A549 (cell line): ENCODE measurements at regions of chr15 and their contacts with region 1.

Region 1: GRCh38 chr15:41465822-41466421 is 27.8 kb upstream of the ITPKA start:
- DNase-seq: peak; percentile 31 to 56
- ATAC-seq: peak; percentile 59 to 77; a peak in 5 of 6 replicates
- H3K4me3 ChIP-seq: no peak overlapping the region
- H3K27ac ChIP-seq: no peak overlapping the region
- H3K4me1 ChIP-seq: no peaks in the 10 kb centered on the region
- CTCF ChIP-seq: peak; percentile 80
- EP300 ChIP-seq: no peak
- POLR2A ChIP-seq: no peak
- RAD21 ChIP-seq: peak; percentile 76 to 83

Region 2: DNA sequence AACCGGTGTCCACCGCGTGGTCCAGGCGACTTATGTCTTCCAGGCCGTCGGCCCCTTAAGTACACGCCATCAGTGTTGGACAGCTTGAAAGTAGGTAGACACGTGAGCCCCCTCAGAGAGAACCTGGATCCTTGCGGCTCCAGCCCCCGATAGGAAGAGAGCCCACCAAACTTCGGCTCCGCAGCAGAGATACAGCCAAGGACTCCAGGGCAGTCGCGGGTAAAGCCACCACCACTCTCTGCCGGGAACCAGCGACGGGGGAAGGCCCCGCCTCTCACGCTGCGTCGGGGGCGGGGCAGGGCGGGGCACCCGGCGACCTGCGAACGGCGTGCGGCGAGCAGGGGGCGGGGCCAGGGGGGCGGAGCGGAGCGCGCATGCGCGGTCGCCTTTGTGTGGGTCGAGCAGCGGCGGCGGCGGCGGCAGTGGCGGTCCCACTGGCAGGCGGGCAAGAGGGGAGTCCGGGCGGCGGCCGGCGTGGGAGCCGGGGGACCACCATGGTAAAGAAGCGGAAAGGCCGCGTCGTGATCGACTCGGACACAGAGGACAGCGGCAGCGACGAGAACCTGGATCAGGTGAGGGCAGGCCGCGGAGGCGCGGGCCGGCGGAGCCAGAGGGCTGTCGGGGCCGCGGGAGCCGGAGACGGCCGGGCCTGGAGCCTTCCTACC is 49.0 kb before region 1 on chr15 and contains the start of gene RTF1:
- CTCF ChIA-PET with region 1: no interaction called
- POLR2A ChIA-PET with region 1: no interaction called
- DNase-seq: peak; percentile 57 to 84
- ATAC-seq: peak; percentile 88 to 91
- H3K4me3 ChIP-seq: peak within 1 kb of the TSS; percentile 86
- H3K27ac ChIP-seq: peak within 1 kb of the TSS; percentile 84 to 95
- H3K4me1 ChIP-seq: peaks cover 13% of the 10 kb centered on the region; the same call in 2 of the 3 replicates
- CTCF ChIP-seq: no peak
- EP300 ChIP-seq: no peak
- POLR2A ChIP-seq: peak; percentile 77
- RAD21 ChIP-seq: no peak
- polyA plus RNA-seq, gene RTF1: 20.0 and 22.8 TPM in 2 replicates

Region 3: GRCh38 chr15:41476416-41477048 is 10.6 kb after region 1 on chr15:
- CTCF ChIA-PET with region 1: interaction called, 20 read pairs
- POLR2A ChIA-PET with region 1: no interaction called
- DNase-seq: no peak
- ATAC-seq: no peak
- H3K4me3 ChIP-seq: no peak overlapping the region
- H3K27ac ChIP-seq: peak overlapping the region; percentile 58 to 72; a peak in 4 of 6 replicates
- H3K4me1 ChIP-seq: peaks cover 16% of the 10 kb centered on the region; the same call in 2 of the 3 replicates
- CTCF ChIP-seq: no peak
- EP300 ChIP-seq: no peak
- POLR2A ChIP-seq: no peak
- RAD21 ChIP-seq: no peak

Region 4: DNA sequence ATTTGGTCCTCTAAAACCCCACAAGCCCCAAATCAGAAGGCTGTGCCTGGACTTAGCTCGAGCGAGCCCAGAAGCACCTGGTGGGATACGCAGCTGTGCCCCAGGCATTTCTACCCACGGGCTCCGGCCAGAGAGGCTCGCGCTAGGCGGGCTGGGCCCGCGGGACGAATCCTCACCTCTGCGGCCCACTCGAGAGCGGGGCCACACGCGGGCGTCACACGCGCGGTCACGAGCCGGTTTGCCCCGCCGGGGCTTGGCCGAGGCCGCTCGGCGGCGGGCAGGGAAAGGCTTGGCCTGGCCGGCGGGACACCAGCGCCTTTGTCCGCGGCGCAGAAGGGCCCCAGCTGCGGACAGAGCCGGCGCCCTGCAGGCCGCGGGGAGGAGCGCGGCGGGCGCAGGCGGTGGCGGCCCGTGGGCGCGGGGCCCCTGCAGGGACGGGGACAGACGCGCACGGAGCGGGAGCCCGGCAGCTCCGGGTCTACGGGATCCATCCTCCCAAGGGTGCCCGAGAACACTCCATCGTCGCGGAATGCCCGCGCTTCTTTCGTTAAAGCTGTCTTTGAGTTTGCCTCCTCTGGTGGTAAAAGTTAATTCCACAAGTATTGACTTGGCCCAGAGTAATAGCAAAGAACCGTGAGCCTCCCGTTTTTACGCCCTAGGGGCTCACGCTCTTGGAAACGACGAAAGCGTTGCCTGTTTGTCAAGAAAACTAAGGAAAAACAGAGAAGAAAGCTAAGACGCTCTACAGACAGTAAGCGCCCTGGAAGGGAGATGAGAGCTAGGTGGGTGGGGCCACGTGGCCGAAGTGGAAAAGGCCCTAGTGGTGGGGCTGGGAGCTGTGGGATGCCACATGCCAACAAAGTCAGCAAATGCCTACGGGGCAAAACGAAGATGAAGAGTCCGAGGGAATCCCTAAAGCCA is 119.5 kb after region 1 on chr15:
- CTCF ChIA-PET with region 1: interaction called, 11 read pairs
- POLR2A ChIA-PET with region 1: no interaction called
- DNase-seq: peak; percentile 35 to 44
- ATAC-seq: peak; percentile 91 to 92
- H3K4me3 ChIP-seq: peak overlapping the region; percentile 39
- H3K27ac ChIP-seq: peak overlapping the region; percentile 41 to 76; a peak in 5 of 6 replicates
- H3K4me1 ChIP-seq: peaks cover 5% of the 10 kb centered on the region; the same call in 1 of the 3 replicates
- CTCF ChIP-seq: peak; percentile 24; the same call in 2 of the 3 replicates
- EP300 ChIP-seq: no peak
- POLR2A ChIP-seq: no peak
- RAD21 ChIP-seq: no peak

Region 5: DNA sequence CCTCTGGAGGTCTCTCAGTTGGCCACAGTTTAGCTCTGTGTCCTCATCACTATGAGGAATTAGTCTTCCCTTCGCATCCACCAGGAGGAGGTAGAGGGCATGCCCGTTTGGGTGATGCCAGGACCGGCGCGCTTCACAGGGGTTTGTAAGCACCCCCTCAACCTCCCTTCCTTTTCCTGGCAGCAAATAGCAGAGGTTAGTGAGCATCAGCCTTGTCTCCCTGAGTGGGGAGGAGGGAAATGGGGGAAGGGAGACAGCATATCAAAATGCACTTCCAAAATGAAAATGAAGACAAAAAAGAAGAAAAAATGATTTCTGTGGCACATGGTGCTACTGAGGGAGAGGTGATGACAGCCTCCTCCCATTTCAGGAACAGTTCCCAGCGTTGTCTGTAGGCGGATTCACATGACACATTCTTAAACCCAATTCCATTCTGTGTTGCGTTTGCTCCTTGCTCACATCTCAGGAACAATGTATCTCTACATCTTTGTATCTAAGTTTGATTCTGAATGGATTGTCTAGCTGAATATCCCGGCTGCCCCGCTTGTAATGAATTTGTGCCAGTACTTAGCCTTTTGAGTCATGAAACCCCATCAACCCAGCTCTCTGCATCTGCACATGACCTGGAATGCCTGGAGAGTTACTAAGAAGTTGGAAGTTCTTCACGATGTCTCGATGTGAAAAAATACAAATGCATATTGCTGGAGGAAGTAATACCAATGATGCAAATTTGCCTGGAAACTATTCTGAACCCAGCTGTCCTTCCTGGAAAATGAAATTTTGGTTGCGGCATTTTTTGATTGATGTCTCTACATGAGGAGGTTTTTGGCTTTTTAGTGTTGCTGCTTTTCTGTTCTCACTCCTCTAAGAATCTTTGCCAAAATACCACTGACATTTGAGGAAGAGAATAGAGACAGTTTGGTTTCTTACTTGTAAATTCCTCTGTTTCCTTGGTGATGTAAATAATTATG is 138.3 kb after region 1 on chr15:
- CTCF ChIA-PET with region 1: interaction called, 11 read pairs
- POLR2A ChIA-PET with region 1: no interaction called
- DNase-seq: peak; percentile 73 to 76
- ATAC-seq: peak; percentile 98 to 99
- H3K4me3 ChIP-seq: peak overlapping the region; percentile 32; the same call in 2 of the 3 replicates
- H3K27ac ChIP-seq: peak overlapping the region in 1 of 2 experiments; percentile 59; a peak in 3 of 6 replicates
- H3K4me1 ChIP-seq: peaks cover 5% of the 10 kb centered on the region; the same call in 1 of the 3 replicates
- CTCF ChIP-seq: peak; percentile 64
- EP300 ChIP-seq: no peak
- POLR2A ChIP-seq: no peak
- RAD21 ChIP-seq: peak; percentile 52 to 64; a peak in 4 of 5 replicates